IMR-90 (cell line): ENCODE measurements at regions of chr4 and their contacts with region 1.

Region 1: DNA sequence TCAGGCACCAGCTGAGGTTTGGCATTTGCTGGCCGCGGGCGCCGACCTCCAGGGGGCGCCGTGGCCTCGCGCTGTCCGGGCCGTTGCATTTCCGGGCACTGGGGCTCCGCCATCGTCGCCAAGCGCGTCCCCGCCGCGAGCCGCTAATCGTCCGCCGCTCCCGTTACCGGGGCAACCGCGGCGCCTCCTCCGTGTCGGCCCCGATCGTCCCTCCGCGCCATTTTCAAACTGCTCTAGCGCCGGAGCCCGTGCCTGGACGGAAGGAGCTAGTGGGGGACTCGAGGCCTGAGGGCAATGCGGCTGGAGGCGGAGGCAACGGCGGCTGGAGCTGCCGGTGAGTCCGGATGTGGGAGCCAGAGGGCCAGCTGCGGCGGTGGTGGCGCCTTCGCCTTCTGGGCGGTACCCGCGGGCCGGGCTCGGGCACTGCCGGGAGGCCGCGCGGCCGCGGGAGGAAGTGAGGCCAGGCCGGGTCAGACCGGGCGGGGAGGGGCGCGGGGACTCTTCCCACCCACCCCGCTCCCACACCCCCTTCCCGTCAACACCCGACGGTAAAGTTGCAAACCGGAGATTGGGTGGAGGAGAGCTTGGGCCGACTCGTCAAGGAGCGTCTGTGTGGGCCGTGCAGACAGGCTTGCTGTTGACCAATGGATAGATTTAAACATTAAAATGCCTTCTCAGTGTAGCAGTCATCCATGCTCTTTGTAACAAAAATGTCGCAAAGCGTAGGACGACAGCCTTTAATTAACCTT is at the start of gene CEP135:
- DNase-seq: peak; percentile 88
- ATAC-seq: peak; percentile 86
- H3K4me3 ChIP-seq: peak within 1 kb of the TSS; percentile 79
- H3K27ac ChIP-seq: peak within 1 kb of the TSS; percentile 99
- H3K4me1 ChIP-seq: peaks cover 6% of the 10 kb centered on the region
- H3K27me3 ChIP-seq: no peaks in the 10 kb centered on the region
- CTCF ChIP-seq: peak; percentile 89
- POLR2A ChIP-seq: peak; percentile 80; the same call in 1 of the 2 replicates
- RAD21 ChIP-seq: peak; percentile 68
- total RNA-seq, gene CEP135: 3.2 and 6.4 TPM in 2 replicates

Region 2: DNA sequence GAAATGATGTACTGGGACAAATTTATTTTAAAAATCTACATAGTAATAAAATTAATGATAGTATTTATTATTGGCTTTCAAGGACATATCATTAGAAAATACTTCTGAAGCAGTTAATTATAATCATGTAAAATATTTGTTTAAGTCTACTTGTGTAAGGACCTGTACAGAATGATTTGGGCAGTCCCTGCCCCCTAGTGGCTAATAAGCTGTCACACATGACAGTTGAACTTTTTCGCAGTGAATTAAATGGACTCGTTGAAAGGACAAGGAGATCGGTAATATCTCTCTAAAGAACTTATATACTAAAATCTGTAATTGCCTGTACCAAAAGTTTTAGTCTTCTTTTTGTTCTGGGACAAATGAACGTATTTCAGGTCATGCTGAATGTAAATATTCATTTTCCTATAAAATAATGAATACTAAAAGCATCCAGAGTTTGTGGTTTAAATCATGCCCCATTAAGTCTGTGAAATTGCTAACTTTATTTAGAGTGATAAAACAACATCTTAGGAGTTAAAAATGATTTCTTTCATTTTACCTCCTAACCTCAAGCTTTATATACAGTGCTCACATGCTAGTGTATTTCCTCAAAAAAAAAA is 81.8 kb before region 1 on chr4:
- CTCF ChIA-PET with region 1: interaction called, 6 read pairs
- POLR2A ChIA-PET with region 1: interaction called, 5 read pairs
- dilution Hi-C with region 1: no loop called
- in situ Hi-C with region 1: no loop called
- intact Hi-C with region 1: loop called (anchors 2 kb)
- DNase-seq: peak; percentile 74
- ATAC-seq: peak; percentile 75
- H3K4me3 ChIP-seq: no peak overlapping the region
- H3K27ac ChIP-seq: no peak overlapping the region
- H3K4me1 ChIP-seq: peaks cover 2% of the 10 kb centered on the region; the same call in 1 of the 2 replicates
- H3K27me3 ChIP-seq: no peaks in the 10 kb centered on the region
- CTCF ChIP-seq: peak; percentile 79
- POLR2A ChIP-seq: no peak
- RAD21 ChIP-seq: peak; percentile 62

Region 3: DNA sequence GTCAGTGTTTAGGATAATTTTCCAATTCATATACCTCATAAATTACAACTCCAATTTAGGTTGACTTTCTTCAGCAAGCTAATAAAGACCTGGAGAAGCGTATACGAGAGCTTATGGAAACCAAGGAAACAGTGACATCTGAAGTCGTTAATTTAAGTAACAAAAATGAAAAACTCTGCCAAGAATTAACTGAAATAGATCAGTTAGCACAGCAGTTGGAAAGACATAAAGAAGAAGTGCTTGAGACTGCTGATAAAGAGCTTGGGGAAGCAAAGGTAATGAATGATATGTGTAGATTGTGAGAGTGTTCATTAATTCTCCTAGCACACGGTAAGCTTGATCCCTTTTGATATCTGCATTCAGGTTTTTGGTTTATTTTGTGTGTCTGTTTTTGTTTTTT is 16.7 kb after region 1 on chr4:
- CTCF ChIA-PET with region 1: interaction called, 11 read pairs
- POLR2A ChIA-PET with region 1: no interaction called
- dilution Hi-C with region 1: no loop called
- in situ Hi-C with region 1: no loop called
- intact Hi-C with region 1: loop called (anchors 1 kb)
- DNase-seq: no peak
- ATAC-seq: no peak
- H3K4me3 ChIP-seq: no peak overlapping the region
- H3K27ac ChIP-seq: no peak overlapping the region
- H3K4me1 ChIP-seq: no peaks in the 10 kb centered on the region
- H3K27me3 ChIP-seq: no peaks in the 10 kb centered on the region
- CTCF ChIP-seq: no peak
- POLR2A ChIP-seq: no peak
- RAD21 ChIP-seq: no peak

Region 4: GRCh38 chr4:56301181-56302076 is 352.5 kb after region 1 on chr4:
- CTCF ChIA-PET with region 1: no interaction called
- POLR2A ChIA-PET with region 1: no interaction called
- dilution Hi-C with region 1: no loop called
- in situ Hi-C with region 1: no loop called
- intact Hi-C with region 1: loop called (anchors 1 kb)
- DNase-seq: peak; percentile 86
- ATAC-seq: peak; percentile 97
- H3K4me3 ChIP-seq: no peak overlapping the region
- H3K27ac ChIP-seq: no peak overlapping the region
- H3K4me1 ChIP-seq: no peaks in the 10 kb centered on the region
- H3K27me3 ChIP-seq: no peaks in the 10 kb centered on the region; the same call in 1 of the 2 replicates
- CTCF ChIP-seq: peak; percentile 87
- POLR2A ChIP-seq: no peak
- RAD21 ChIP-seq: peak; percentile 93

Region 5: DNA sequence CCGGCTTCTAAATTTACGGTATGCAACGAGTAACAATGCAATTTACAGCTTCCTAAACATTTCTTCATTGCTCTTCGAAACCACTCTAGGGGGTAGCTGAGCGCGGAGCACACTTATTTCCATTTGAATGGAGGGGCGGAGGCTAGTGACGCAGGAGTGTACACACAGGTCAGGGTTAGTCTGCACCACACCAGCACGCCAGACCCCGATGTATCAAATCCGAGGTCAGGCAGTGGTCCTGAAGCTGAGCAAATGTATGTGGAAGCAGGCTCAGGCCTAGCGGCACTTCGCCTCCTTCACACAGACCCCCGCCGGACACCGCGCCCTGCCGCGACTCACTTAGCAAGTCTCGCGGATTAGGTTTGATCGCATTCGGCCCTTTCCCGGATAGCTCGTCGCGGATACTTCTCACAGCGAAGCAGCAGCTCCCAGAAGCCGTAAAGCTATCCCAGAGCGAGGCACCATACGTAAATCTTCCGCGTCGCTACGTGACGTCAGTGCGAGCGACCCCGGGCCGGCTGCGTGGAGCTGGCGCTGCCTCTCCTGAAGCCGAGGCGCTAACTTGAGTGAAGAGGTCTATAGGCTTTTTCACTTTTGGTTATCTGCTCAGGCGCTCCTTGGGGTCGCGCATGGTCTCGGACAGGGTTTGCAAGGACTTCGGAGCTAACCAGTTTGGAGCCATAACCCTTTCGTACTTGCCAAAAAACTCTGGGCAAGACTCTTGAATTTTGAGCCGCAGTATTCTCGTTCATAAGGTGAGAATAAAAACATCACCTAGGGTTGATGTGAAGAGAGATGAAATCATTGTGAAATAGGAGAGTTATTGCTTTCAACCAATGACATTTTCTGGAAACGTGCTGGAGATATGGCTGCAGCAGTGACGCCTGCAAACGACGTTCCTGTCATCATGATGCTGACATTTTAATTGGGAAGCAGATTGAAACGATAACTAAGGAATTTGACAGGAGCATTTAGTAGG is 438.4 kb after region 1 on chr4 and contains the start of gene AASDH:
- CTCF ChIA-PET with region 1: no interaction called
- POLR2A ChIA-PET with region 1: no interaction called
- dilution Hi-C with region 1: no loop called
- in situ Hi-C with region 1: no loop called
- intact Hi-C with region 1: loop called (anchors 2 kb)
- DNase-seq: peak; percentile 95
- ATAC-seq: peak; percentile 93
- H3K4me3 ChIP-seq: peak within 1 kb of the TSS; percentile 61
- H3K27ac ChIP-seq: peak within 1 kb of the TSS; percentile 89
- H3K4me1 ChIP-seq: peaks cover 3% of the 10 kb centered on the region; the same call in 1 of the 2 replicates
- H3K27me3 ChIP-seq: no peaks in the 10 kb centered on the region
- CTCF ChIP-seq: no peak
- POLR2A ChIP-seq: peak; percentile 93
- RAD21 ChIP-seq: no peak
- total RNA-seq, gene AASDH: 12.0 and 13.1 TPM in 2 replicates

Region 6: GRCh38 chr4:56668298-56668697 is 719.4 kb after region 1 on chr4:
- CTCF ChIA-PET with region 1: no interaction called
- POLR2A ChIA-PET with region 1: no interaction called
- dilution Hi-C with region 1: no loop called
- in situ Hi-C with region 1: no loop called
- intact Hi-C with region 1: no loop called
- DNase-seq: no peak
- ATAC-seq: no peak
- H3K4me3 ChIP-seq: no peak overlapping the region
- H3K27ac ChIP-seq: no peak overlapping the region
- H3K4me1 ChIP-seq: no peaks in the 10 kb centered on the region
- H3K27me3 ChIP-seq: peaks cover 6% of the 10 kb centered on the region
- CTCF ChIP-seq: peak; percentile 29
- POLR2A ChIP-seq: no peak
- RAD21 ChIP-seq: peak; percentile 41

Region 7: GRCh38 chr4:56739066-56739777 is 790.3 kb after region 1 on chr4:
- CTCF ChIA-PET with region 1: no interaction called
- POLR2A ChIA-PET with region 1: no interaction called
- dilution Hi-C with region 1: no loop called
- in situ Hi-C with region 1: no loop called
- intact Hi-C with region 1: no loop called
- DNase-seq: peak; percentile 32
- ATAC-seq: peak; percentile 48
- H3K4me3 ChIP-seq: no peak overlapping the region
- H3K27ac ChIP-seq: no peak overlapping the region
- H3K4me1 ChIP-seq: peaks cover 5% of the 10 kb centered on the region; the same call in 1 of the 2 replicates
- H3K27me3 ChIP-seq: peaks cover 8% of the 10 kb centered on the region
- CTCF ChIP-seq: no peak
- POLR2A ChIP-seq: no peak
- RAD21 ChIP-seq: no peak